PC-3 (cell line): ENCODE measurements at regions of chr11 and their contacts with region 1.

Region 1: DNA sequence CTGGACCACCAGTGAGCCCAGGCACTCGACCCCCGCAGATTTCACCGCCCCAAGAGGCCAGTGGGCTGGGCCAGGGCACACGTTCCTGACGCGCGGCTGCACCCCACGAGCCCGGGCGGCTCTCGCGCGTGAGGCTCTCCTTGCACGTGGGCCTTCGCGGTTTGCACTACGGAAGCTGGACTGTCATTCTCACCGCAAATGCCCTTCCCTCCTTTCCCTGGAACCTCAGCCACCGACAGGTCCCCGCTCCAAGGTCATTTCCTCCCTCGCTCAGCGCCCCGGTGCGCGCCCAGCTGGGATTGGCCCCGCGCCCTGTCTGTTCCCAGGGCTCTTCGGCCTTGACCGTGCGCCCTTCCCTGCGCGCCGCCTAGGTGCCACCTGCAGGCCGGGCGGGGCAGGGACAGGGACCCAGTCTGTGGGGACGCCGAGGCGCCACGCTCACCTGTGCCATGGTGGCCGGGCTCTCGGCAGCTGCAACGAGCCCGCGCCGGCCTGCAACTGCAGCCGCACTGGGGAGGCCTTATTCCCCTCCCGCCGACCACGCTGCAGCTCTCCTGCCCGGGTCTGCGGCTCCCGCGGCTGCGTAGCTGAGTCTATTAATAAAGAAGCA is 2.1 kb upstream of the CPT1A start:
- DNase-seq: peak; percentile 89
- ATAC-seq: peak; percentile 61
- H3K4me3 ChIP-seq: peak overlapping the region; percentile 59
- H3K27ac ChIP-seq: no peak overlapping the region
- H3K4me1 ChIP-seq: peaks cover 26% of the 10 kb centered on the region
- H3K27me3 ChIP-seq: no peaks in the 10 kb centered on the region
- CTCF ChIP-seq: peak; percentile 82

Region 2: GRCh38 chr11:68610452-68611116 is 233.2 kb before region 1 on chr11:
- CTCF ChIA-PET with region 1: interaction called, 10 read pairs
- POLR2A ChIA-PET with region 1: no interaction called
- intact Hi-C with region 1: no loop called
- DNase-seq: no peak
- ATAC-seq: peak; percentile 43; the same call in 1 of the 2 replicates
- H3K4me3 ChIP-seq: no peak overlapping the region
- H3K27ac ChIP-seq: no peak overlapping the region
- H3K4me1 ChIP-seq: no peaks in the 10 kb centered on the region
- H3K27me3 ChIP-seq: no peaks in the 10 kb centered on the region
- CTCF ChIP-seq: peak; percentile 54; the same call in 1 of the 2 replicates

Region 3: GRCh38 chr11:68632802-68633201 is 211.0 kb before region 1 on chr11:
- CTCF ChIA-PET with region 1: no interaction called
- POLR2A ChIA-PET with region 1: no interaction called
- intact Hi-C with region 1: loop called (anchors 10 kb)
- DNase-seq: peak; percentile 88
- ATAC-seq: peak; percentile 97
- H3K4me3 ChIP-seq: no peak overlapping the region
- H3K27ac ChIP-seq: no peak overlapping the region
- H3K4me1 ChIP-seq: no peaks in the 10 kb centered on the region
- H3K27me3 ChIP-seq: peaks cover 14% of the 10 kb centered on the region
- CTCF ChIP-seq: peak; percentile 97

Region 4: GRCh38 chr11:68751004-68751856 is 92.6 kb before region 1 on chr11 and contains the start of gene TESMIN:
- CTCF ChIA-PET with region 1: no interaction called
- POLR2A ChIA-PET with region 1: no interaction called
- intact Hi-C with region 1: no loop called
- DNase-seq: peak; percentile 92
- ATAC-seq: peak; percentile 86
- H3K4me3 ChIP-seq: peak within 1 kb of the TSS; percentile 69
- H3K27ac ChIP-seq: no peak within 1 kb of the TSS
- H3K4me1 ChIP-seq: peaks cover 15% of the 10 kb centered on the region
- H3K27me3 ChIP-seq: no peaks in the 10 kb centered on the region
- CTCF ChIP-seq: no peak
- total RNA-seq, gene TESMIN: 25.8 and 30.2 TPM in 2 replicates

Region 5: DNA sequence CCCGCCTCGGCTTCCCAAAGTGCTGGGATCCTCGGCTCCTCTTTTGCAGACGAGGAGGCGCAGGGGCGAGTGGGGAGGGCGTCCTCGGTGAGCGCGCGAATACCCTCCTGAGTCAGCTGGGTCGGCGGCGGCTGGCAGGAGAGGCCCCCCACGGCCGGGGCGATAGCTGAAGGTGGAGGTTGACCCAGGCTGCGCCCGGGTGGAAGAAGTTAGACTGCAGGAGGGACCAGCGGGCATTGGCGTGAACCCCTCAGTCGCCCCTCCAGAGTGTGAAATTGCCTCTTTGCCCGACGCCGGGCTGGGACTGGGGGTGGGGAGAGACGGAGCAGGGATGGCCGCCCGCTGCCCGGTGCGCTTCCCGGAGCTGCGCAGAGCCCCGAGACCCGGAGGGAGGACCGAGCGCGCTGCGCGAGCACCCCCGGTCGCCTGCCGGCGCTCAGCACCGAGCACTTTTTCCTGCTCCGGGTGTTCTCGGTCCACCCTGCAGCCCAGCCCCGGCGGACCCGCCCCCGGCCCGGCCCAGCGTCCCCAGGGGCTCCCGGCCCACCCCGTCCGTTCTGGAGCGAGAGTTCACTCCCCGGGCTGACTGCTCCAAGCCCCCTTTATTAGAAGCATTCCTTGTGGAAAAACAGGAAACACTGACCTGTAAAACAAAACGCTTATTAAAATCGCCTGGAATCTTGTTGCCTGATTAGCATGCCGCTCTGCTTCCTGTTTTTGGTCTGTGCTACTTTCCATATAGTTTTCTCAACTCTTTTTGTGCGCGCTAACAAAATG is 11.6 kb after region 1 on chr11:
- CTCF ChIA-PET with region 1: no interaction called
- POLR2A ChIA-PET with region 1: no interaction called
- intact Hi-C with region 1: no loop called
- DNase-seq: no peak
- ATAC-seq: no peak; the same call in 1 of the 2 replicates
- H3K4me3 ChIP-seq: peak overlapping the region; percentile 63
- H3K27ac ChIP-seq: no peak overlapping the region
- H3K4me1 ChIP-seq: peaks cover 18% of the 10 kb centered on the region
- H3K27me3 ChIP-seq: no peaks in the 10 kb centered on the region
- CTCF ChIP-seq: no peak

Region 6: GRCh38 chr11:68903288-68904247 is 59.8 kb after region 1 on chr11 and contains the starts of genes IGHMBP2 and MRPL21:
- CTCF ChIA-PET with region 1: no interaction called
- POLR2A ChIA-PET with region 1: no interaction called
- intact Hi-C with region 1: loop called (anchors 5 kb)
- DNase-seq: peak; percentile 94
- ATAC-seq: peak; percentile 84
- H3K4me3 ChIP-seq: peak within 1 kb of the TSS; percentile 86
- H3K27ac ChIP-seq: peak within 1 kb of the TSS; percentile 43
- H3K4me1 ChIP-seq: peaks cover 27% of the 10 kb centered on the region
- H3K27me3 ChIP-seq: no peaks in the 10 kb centered on the region
- CTCF ChIP-seq: no peak
- total RNA-seq, gene IGHMBP2: 20.5 and 22.5 TPM in 2 replicates
- total RNA-seq, gene MRPL21: 200 and 230 TPM in 2 replicates

Region 7: GRCh38 chr11:69292221-69292648 is 448.4 kb after region 1 on chr11:
- CTCF ChIA-PET with region 1: no interaction called
- POLR2A ChIA-PET with region 1: no interaction called
- intact Hi-C with region 1: no loop called
- DNase-seq: peak; percentile 47
- ATAC-seq: no peak
- H3K4me3 ChIP-seq: no peak overlapping the region
- H3K27ac ChIP-seq: no peak overlapping the region
- H3K4me1 ChIP-seq: peaks cover 24% of the 10 kb centered on the region
- H3K27me3 ChIP-seq: no peaks in the 10 kb centered on the region
- CTCF ChIP-seq: peak; percentile 94